ENCODE measurements at regions of chr19 and their contacts with region 1.

Region 1: DNA sequence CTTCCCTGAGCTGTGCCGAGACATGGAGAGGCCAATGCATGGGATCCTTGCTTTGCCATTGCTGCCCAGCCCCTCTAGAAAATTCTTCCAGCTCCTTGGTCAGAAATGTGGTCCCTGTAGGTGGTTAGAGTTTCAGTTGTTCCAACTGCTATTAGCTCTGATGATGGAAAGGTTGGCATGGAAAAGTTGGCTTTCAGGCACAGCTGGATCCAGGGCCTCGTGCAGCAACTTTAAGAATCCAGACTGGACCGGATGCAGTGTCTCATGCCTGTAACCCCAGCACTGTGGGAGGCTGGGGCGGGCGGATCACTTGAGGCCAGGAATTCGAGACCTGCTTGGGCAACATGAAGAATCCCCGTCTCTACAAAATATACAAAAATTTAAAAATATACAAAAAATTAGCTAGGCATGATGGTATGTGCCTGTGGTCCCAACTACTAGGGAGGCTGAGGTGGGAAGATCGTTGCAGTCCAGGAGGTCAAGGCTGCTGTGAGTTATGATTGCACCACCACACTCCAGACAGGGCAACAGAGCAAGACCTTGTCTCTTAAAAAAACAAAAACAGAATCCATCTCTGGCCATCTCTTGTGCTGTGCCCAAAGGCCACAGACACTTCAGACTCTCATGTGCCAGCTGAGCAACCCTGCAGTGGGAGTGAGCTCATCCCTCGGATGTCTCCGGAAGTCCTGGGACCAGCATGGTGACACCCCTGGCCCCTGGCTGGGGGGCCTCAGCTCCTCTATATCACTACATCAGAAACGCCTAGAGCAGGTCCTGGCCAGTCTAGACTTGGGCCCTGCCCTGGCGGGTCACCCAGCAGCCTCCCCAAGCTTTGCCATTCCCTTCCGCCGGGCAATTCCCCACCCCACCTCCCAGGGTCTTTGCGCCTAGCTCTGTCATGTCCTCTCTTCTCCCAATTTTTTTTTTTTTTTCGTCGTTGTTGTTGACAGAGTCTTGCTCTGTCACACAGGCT is 16.8 kb downstream of the MEX3D start:
- DNase-seq: no peak
- ATAC-seq: no peak
- H3K4me3 Mint-ChIP-seq: no peak overlapping the region
- H3K27ac Mint-ChIP-seq: no peak overlapping the region
- H3K4me1 Mint-ChIP-seq: no peaks in the 10 kb centered on the region
- H3K27me3 Mint-ChIP-seq: peaks cover 3% of the 10 kb centered on the region; the same call in 1 of the 2 replicates
- CTCF ChIP-seq: no peak

Region 2: DNA sequence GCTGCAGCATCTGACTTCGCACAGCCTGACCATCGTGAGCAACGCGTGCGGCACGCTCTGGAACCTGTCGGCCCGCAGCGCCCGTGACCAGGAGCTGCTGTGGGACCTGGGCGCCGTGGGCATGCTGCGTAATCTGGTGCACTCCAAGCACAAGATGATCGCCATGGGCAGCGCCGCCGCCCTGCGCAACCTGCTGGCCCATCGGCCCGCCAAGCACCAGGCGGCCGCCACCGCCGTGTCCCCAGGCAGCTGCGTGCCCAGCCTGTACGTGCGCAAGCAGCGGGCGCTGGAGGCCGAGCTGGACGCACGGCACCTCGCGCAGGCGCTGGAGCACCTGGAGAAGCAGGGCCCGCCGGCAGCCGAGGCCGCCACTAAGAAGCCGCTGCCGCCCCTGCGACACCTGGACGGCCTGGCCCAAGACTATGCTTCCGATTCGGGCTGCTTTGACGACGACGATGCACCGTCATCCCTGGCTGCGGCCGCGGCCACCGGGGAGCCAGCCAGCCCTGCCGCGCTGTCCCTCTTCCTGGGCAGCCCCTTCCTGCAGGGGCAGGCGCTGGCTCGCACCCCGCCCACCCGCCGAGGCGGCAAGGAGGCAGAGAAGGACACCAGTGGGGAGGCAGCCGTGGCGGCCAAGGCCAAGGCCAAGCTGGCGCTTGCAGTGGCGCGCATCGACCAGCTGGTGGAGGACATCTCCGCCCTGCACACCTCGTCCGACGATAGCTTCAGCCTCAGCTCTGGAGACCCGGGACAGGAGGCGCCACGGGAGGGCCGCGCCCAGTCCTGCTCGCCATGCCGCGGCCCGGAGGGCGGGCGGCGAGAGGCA is 86.0 kb before region 1 on chr19:
- CTCF ChIA-PET with region 1: interaction called, 10 read pairs
- POLR2A ChIA-PET with region 1: no interaction called
- DNase-seq: peak; percentile 74
- ATAC-seq: peak; percentile 20
- H3K4me3 Mint-ChIP-seq: no peak overlapping the region
- H3K27ac Mint-ChIP-seq: no peak overlapping the region
- H3K4me1 Mint-ChIP-seq: peaks cover 2% of the 10 kb centered on the region; the same call in 1 of the 2 replicates
- H3K27me3 Mint-ChIP-seq: peaks cover 64% of the 10 kb centered on the region
- CTCF ChIP-seq: no peak

Region 3: DNA sequence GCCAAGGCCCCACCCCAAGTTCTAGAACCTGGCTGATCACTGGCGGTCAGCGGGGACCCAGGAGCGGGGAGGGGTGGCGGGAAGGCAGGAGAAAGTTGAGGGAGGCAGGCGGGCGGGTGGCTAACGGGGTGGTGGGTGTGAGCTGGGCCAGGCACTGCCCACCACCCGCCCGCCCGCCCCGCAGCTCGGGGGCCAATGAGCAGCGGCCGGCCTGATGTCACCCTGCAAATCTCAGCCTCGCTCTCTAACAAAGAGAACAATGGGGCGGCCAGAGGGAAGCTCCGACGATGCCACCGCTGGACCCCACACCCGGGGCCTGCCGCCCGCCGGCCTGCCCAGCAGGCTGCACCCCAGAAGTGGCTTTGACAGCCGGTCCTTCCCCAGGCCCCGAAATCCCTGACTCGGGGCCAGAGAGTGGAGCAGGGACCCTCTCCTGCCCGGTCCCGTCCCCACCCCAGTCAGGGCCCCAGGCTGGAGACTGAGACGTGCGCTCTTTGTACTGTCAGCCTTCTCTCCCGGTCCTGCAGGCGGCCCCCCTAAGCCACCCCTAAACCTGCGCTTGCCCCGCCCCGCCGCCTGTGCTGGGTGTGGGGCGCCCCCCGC is 15.3 kb after region 1 on chr19:
- CTCF ChIA-PET with region 1: interaction called, 14 read pairs
- POLR2A ChIA-PET with region 1: interaction called, 3 read pairs
- DNase-seq: peak; percentile 74
- ATAC-seq: peak; percentile 84
- H3K4me3 Mint-ChIP-seq: peak overlapping the region; percentile 54
- H3K27ac Mint-ChIP-seq: no peak overlapping the region
- H3K4me1 Mint-ChIP-seq: peaks cover 6% of the 10 kb centered on the region
- H3K27me3 Mint-ChIP-seq: peaks cover 33% of the 10 kb centered on the region
- CTCF ChIP-seq: no peak

Region 4: GRCh38 chr19:1587873-1588272 is 36.5 kb after region 1 on chr19:
- CTCF ChIA-PET with region 1: interaction called, 21 read pairs
- POLR2A ChIA-PET with region 1: interaction called, 4 read pairs
- DNase-seq: no peak
- ATAC-seq: no peak
- H3K4me3 Mint-ChIP-seq: no peak overlapping the region
- H3K27ac Mint-ChIP-seq: peak overlapping the region; percentile 84
- H3K4me1 Mint-ChIP-seq: peaks cover 10% of the 10 kb centered on the region
- H3K27me3 Mint-ChIP-seq: no peaks in the 10 kb centered on the region
- CTCF ChIP-seq: no peak

Region 5: DNA sequence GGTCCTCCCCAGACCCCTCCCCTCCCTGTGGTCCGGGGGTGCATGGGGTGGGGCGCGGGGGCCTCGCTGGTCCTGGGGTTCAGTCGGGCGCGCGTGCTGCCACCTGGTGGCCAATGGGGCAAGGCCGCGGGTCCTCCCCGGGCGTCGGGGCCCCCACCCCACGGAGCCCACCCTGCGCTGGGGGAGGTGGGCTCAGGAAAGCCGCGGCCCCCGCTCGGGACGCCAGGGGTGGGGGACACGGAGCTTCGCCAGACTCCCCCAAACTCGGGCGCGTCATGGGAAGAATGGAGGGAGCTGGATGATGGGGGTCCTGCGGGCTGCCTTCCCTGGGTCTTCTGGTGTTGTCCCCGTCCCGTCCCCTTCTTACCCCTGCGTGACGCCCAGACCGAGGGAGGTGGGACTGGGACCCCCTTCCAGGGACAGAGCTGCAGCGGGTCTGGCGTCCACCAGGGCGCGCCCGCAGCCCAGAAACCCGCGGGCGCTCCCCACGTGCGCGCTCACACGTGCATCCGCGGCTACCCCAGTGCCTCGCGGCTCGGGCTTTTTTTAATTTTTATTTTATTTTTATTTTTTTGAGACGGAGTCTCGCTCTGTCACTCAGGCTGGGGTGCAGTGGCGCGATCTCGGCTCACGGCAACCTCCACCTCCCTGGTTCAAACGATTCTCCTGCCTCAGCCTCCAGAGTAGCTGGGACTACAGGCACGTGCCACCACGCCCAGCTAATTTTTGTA is 120.8 kb after region 1 on chr19:
- CTCF ChIA-PET with region 1: interaction called, 41 read pairs
- POLR2A ChIA-PET with region 1: no interaction called
- DNase-seq: peak; percentile 62
- ATAC-seq: peak; percentile 24
- H3K4me3 Mint-ChIP-seq: peak overlapping the region; percentile 41
- H3K27ac Mint-ChIP-seq: no peak overlapping the region
- H3K4me1 Mint-ChIP-seq: peaks cover 18% of the 10 kb centered on the region
- H3K27me3 Mint-ChIP-seq: peaks cover 90% of the 10 kb centered on the region
- CTCF ChIP-seq: peak; percentile 84